K562 (cell line): ENCODE measurements at regions of chr21 and their contacts with region 1.

Region 1: DNA sequence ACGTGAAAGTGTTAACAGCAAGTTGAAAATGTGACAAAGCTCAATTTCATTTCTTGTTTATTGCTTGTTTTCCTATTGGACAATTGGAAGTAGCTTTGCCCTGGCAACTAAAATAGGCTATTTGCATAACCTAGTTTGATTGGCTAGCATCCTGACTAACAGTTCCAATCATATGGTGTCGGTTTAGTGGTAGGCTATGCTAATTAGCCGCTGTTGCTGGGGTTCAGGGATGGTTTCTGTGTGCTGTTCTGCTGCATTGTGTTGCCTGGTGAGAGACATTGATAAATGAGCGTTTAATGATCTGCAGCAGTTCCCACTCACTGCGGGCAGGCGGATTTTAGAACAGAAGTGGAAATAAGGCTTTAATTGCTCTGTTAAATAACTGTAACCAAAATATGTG is 68.5 kb downstream of the DYRK1A start:
- DNase-seq: peak; percentile 33 to 94 (median 67)
- ATAC-seq: peak; percentile 100
- H3K4me3 ChIP-seq: no peak overlapping the region
- H3K27ac ChIP-seq: peak overlapping the region; percentile 24; the same call in 1 of the 3 replicates
- H3K4me1 ChIP-seq: peaks cover 0 to 15% of the 10 kb centered on the region in 2 experiments; a peak in 3 of 5 replicates
- H3K27me3 ChIP-seq: no peaks in the 10 kb centered on the region
- CTCF ChIP-seq: no peak
- EP300 ChIP-seq: no peak
- POLR2A ChIP-seq: no peak
- RAD21 ChIP-seq: no peak

Region 2: GRCh38 chr21:37195059-37195458 is 240.1 kb before region 1 on chr21:
- CTCF ChIA-PET with region 1: no interaction called
- POLR2A ChIA-PET with region 1: no interaction called
- in situ Hi-C with region 1: no loop called
- intact Hi-C with region 1: no loop called
- DNase-seq: no peak
- ATAC-seq: no peak
- H3K4me3 ChIP-seq: no peak overlapping the region
- H3K27ac ChIP-seq: no peak overlapping the region
- H3K4me1 ChIP-seq: peaks cover 0 to 2% of the 10 kb centered on the region in 2 experiments; a peak in 1 of 5 replicates
- H3K27me3 ChIP-seq: no peaks in the 10 kb centered on the region
- CTCF ChIP-seq: no peak
- EP300 ChIP-seq: no peak
- POLR2A ChIP-seq: no peak
- RAD21 ChIP-seq: no peak

Region 3: GRCh38 chr21:37389456-37389855 is 45.7 kb before region 1 on chr21:
- CTCF ChIA-PET with region 1: no interaction called
- POLR2A ChIA-PET with region 1: no interaction called
- in situ Hi-C with region 1: no loop called
- intact Hi-C with region 1: no loop called
- DNase-seq: no peak
- ATAC-seq: no peak
- H3K4me3 ChIP-seq: no peak overlapping the region
- H3K27ac ChIP-seq: no peak overlapping the region
- H3K4me1 ChIP-seq: peaks cover 3 to 22% of the 10 kb centered on the region in 2 experiments; a peak in 3 of 5 replicates
- H3K27me3 ChIP-seq: no peaks in the 10 kb centered on the region
- CTCF ChIP-seq: no peak
- EP300 ChIP-seq: no peak
- POLR2A ChIP-seq: 0 out of 2 replicates have a peak, but pooled peaks have one; percentile 42
- RAD21 ChIP-seq: no peak

Region 4: DNA sequence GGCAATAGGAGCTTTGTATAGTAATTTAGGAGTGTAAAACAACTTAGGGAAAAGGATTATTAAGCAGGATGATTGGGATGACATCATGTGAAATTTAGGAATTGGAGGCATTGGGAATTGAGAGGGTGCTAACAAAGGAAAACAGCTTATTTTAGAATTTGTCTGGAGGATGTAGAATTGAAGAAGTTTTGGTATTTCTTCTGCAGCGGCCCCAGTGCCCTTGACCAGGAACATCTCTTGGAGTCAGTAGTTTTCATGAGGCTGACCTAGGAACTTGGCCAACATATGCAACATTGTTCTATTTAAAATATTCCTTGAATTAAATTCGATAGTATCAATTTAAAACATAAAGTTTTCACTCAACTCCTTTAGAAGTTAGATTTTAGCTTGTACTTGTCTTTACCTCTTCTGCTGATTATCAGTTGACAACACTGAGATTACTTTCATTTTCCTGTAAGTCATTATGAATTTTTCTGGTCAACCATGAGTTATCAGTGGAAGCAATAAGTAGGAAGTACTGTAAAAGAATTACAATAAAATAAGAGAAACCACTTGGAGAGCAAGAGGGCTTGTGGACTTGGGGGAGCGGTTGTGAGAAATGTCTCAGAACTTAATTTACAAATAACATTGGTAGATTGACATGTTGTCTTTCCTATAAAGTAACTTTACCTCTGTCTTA is 15.8 kb before region 1 on chr21:
- CTCF ChIA-PET with region 1: no interaction called
- POLR2A ChIA-PET with region 1: interaction called, 13 read pairs
- in situ Hi-C with region 1: no loop called
- intact Hi-C with region 1: no loop called
- DNase-seq: peak in 1 of 4 experiments; percentile 25
- ATAC-seq: peak; percentile 16; the same call in 2 of the 3 replicates
- H3K4me3 ChIP-seq: no peak overlapping the region
- H3K27ac ChIP-seq: peak overlapping the region; percentile 40; the same call in 2 of the 3 replicates
- H3K4me1 ChIP-seq: peaks cover 7 to 49% of the 10 kb centered on the region in 2 experiments
- H3K27me3 ChIP-seq: no peaks in the 10 kb centered on the region
- CTCF ChIP-seq: no peak
- EP300 ChIP-seq: 0 out of 2 replicates have a peak, but pooled peaks have one; percentile 16
- POLR2A ChIP-seq: no peak
- RAD21 ChIP-seq: no peak

Region 5: DNA sequence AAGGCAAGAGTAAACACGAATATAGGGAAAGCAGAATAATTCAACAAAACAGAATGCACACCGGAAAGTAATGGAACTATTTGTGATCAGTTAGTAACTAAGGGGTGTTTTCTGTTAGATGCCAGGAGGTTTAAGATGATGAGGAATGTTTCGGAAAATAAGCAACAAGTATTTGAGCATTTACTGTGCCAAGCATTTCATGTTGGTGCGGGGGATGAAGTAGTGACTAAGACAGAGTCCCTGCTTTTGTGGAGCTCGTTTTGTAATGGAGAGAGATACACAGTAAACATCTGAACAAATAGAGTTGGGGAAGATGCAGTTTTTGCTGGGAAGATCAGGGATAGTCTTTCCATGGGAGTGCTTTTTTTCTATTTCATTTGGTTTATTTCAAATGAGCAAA is 10.1 kb after region 1 on chr21:
- CTCF ChIA-PET with region 1: no interaction called
- POLR2A ChIA-PET with region 1: interaction called, 14 read pairs
- in situ Hi-C with region 1: no loop called
- intact Hi-C with region 1: no loop called
- DNase-seq: no peak
- ATAC-seq: no peak
- H3K4me3 ChIP-seq: no peak overlapping the region
- H3K27ac ChIP-seq: no peak overlapping the region
- H3K4me1 ChIP-seq: peaks cover 15 to 40% of the 10 kb centered on the region in 2 experiments
- H3K27me3 ChIP-seq: no peaks in the 10 kb centered on the region
- CTCF ChIP-seq: no peak
- EP300 ChIP-seq: no peak
- POLR2A ChIP-seq: no peak
- RAD21 ChIP-seq: no peak

Region 6: GRCh38 chr21:37606549-37606948 is 171.4 kb after region 1 on chr21:
- CTCF ChIA-PET with region 1: no interaction called
- POLR2A ChIA-PET with region 1: no interaction called
- in situ Hi-C with region 1: no loop called
- intact Hi-C with region 1: no loop called
- DNase-seq: no peak
- ATAC-seq: no peak
- H3K4me3 ChIP-seq: no peak overlapping the region
- H3K27ac ChIP-seq: no peak overlapping the region
- H3K4me1 ChIP-seq: no peaks in the 10 kb centered on the region
- H3K27me3 ChIP-seq: peaks cover 25 to 27% of the 10 kb centered on the region in 2 experiments
- CTCF ChIP-seq: no peak
- EP300 ChIP-seq: no peak
- POLR2A ChIP-seq: no peak
- RAD21 ChIP-seq: no peak